ENCODE measurements at regions of chr15 and their contacts with region 1.

Region 1: DNA sequence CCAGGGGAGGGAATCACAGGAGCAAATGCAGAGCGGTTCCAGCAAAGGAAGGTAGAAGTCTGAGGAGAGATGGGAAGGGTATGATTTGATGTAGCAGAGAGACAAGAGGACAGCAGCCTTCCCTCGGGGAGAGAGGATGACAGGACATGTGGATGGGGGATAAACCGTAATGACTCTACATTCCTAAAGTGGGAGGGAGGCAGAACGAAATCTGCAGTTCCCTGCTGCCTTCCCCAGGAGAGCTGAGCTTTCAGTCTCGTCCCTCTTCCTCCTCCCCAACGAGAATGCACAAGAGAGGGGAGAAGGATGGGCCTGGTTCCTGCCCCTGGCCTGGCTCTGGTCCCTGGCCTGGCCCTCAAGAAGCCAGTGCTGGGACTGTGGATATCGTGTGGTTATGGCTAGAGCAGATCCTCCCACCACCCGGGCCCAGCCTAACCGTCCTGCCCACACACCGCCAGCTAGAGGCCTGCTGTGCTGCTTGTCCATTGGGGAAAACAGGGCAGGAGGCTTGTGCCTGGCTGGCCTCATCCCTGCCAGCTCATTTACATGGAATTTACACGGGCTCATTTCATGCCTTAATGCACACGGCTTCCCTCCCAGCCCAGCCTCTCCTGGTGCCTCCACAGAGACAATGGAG is 26.6 kb downstream of the SEMA7A start:
- DNase-seq: no peak
- CTCF ChIP-seq: no peak

Region 2: DNA sequence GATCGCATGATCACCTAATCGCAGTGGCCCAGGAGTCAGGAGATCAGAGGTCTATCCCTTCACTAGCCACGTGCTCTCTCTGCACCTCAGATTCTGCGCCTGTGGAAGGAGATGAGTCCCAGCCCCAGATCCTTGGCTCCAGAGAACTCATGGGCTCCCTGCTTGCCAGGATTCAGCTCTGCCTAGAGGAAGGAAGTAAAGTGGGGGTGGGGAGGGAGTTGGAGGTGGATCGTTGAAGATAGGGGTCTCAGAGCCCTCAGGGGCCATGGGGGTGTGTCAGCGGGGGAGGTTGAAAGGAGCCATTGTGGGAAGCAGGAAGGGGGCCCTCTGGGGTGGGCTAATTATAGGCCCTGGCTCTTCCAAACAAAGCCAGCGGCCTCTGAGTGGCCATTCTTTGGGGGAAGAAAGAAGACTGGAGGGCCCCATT is 193.3 kb before region 1 on chr15:
- CTCF ChIA-PET with region 1: no interaction called
- POLR2A ChIA-PET with region 1: no interaction called
- DNase-seq: no peak
- CTCF ChIP-seq: no peak

Region 3: GRCh38 chr15:74396445-74397238 is 10.5 kb before region 1 on chr15:
- CTCF ChIA-PET with region 1: interaction called, 4 read pairs
- POLR2A ChIA-PET with region 1: interaction called, 17 read pairs
- DNase-seq: peak; percentile 84
- CTCF ChIP-seq: peak; percentile 25

Region 4: DNA sequence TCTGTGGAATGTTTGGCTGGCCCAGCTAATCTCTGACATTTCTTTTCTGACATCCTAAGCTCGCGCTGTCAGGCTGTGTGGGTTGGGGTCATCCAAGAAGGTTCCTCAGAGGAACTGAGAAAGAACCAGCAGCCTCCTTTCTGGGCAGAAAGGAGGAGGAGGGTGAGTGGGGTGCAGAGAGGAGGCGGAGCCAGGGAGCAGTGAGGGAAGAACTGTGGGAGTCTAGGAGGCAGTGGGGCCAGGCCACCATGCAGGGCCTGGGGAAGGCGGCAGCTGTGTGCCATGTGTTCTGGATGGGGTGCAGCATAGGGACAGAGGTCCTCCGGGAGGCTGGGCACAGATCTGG is 21.2 kb after region 1 on chr15:
- CTCF ChIA-PET with region 1: interaction called, 160 read pairs
- POLR2A ChIA-PET with region 1: interaction called, 29 read pairs
- DNase-seq: no peak
- CTCF ChIP-seq: no peak

Measured in GM10248 (cell line).